Activated naive CD8-positive, alpha-beta T cell treated with anti-CD3 and anti-CD28 coated beads, Interleukin-2, amount 10 ng/mL, durations not matched to agents 7 days and 5 days (primary cell): ENCODE measurements at regions of chr6 and their contacts with region 1.

Region 1: DNA sequence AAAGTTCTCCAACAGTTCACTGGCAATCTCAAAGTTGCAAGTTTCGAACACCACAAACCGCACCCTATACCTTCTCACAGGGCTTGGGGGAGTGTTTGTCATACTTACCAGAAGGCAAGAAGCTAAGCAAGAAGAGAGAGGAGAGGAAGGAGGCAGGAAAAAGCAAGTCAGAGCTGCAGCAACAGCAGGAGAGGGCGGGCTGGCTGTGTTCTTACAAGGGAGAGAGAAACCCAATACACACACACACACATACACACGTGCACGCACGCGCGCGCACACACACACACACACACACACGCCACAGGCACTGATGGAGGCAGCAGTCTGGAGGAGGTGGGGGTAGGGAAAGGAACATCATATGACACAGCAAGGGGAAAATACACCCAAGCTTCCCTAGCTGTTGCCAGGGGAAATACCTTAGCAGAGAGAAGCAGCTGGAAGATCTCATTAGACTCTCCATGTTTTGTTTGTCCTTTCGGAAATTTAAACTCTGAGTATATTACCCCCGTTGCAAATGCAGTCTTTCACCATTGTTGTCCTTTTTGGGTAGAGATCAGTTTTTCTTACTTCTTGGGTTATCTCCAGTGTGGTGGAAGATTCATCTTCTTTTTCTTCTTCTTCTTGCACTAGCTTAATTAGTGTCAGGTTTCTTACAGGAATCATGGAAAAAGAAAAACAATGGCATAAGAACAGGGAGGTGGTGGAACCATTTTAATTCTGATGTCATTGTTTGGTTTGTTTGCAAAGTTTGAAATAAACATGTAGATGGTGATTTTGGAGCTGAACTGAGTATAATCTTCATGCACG is at the start of gene TXLNB:
- DNase-seq: peak; percentile 77
- ATAC-seq: peak; percentile 91
- H3K4me3 Mint-ChIP-seq: peak within 1 kb of the TSS; percentile 91
- H3K27ac Mint-ChIP-seq: peak within 1 kb of the TSS; percentile 100
- H3K4me1 Mint-ChIP-seq: peaks cover 29% of the 10 kb centered on the region
- H3K27me3 Mint-ChIP-seq: no peaks in the 10 kb centered on the region
- total RNA-seq, gene TXLNB: 0.62 to 0.69 TPM

Region 2: GRCh38 chr6:139219271-139219729 is 72.7 kb before region 1 on chr6:
- POLR2A ChIA-PET with region 1: interaction called, 11 read pairs
- DNase-seq: peak; percentile 62
- ATAC-seq: peak; percentile 99
- H3K4me3 Mint-ChIP-seq: no peak overlapping the region
- H3K27ac Mint-ChIP-seq: peak overlapping the region; percentile 87
- H3K4me1 Mint-ChIP-seq: peaks cover 13% of the 10 kb centered on the region
- H3K27me3 Mint-ChIP-seq: no peaks in the 10 kb centered on the region

Region 3: DNA sequence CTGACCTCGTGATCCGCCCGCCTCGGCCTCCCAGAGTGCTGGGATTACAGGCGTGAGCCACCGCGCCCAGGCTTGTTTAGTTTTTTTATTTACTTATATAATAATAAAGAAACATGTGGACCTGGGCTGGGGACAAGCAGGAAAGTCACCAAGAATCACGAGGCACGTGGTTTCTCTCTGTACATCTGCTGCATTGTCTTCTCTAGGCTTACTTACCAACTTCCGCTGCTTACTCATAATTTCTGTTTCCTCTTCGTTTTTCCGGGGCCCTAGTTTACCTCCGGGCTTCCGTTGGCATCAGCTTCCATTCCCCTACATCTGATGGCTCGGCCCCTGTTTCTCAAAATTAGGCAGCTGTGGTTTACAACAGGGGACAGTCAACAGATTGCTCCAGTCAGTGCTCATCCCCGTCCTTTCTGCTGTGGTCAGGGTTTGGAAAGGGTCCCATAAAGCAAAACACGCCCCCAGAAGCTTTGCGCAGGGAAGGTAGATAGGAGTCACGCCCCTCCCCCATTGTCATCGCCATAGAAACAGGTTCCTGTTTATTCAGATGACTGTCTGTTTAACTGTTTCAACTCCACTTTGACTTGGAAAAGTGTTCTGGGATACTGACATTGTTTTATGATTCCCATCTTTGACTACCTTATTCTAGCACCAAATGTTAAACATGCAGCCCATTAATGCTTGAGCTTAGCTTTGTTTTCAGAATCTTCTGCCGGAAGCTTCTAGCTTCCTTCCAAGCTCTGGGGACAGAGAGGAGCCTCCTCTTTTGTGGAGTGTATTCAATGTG is 31.7 kb after region 1 on chr6:
- POLR2A ChIA-PET with region 1: interaction called, 41 read pairs
- DNase-seq: peak; percentile 73
- ATAC-seq: peak; percentile 93
- H3K4me3 Mint-ChIP-seq: peak overlapping the region; percentile 76
- H3K27ac Mint-ChIP-seq: peak overlapping the region; percentile 96
- H3K4me1 Mint-ChIP-seq: peaks cover 11% of the 10 kb centered on the region
- H3K27me3 Mint-ChIP-seq: no peaks in the 10 kb centered on the region